Activated CD8-positive, alpha-beta memory T cell treated with anti-CD3 and anti-CD28 coated beads, Interleukin-2, amount 10 ng/mL, durations not matched to agents 7 days and 5 days (primary cell): ENCODE measurements at regions of chr1 and their contacts with region 1.

Region 1: DNA sequence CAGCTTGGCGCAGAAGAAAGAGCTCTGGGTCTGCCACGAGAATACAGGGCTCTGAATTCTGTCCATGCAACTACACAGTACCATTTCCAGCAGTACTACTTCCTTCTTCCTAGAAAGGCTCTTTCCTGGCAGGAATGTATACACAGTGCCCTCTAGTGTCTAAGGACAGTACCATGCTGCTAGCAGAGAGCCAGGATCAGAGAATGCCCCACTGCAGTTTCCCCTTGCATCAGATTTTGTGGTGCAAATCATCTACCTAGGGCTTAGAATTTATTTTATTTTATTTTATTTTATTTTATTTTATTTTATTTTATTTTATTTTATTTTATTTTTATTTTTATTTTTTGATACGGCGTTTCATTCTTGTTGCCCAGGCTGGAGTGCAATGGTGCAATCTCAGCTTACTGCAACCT is 50.8 kb downstream of the PAX7 start:
- DNase-seq: no peak
- ATAC-seq: peak; percentile 42
- H3K4me3 Mint-ChIP-seq: no peak overlapping the region
- H3K27ac Mint-ChIP-seq: no peak overlapping the region
- H3K4me1 Mint-ChIP-seq: peaks cover 2% of the 10 kb centered on the region
- H3K27me3 Mint-ChIP-seq: peaks cover 11% of the 10 kb centered on the region

Region 2: DNA sequence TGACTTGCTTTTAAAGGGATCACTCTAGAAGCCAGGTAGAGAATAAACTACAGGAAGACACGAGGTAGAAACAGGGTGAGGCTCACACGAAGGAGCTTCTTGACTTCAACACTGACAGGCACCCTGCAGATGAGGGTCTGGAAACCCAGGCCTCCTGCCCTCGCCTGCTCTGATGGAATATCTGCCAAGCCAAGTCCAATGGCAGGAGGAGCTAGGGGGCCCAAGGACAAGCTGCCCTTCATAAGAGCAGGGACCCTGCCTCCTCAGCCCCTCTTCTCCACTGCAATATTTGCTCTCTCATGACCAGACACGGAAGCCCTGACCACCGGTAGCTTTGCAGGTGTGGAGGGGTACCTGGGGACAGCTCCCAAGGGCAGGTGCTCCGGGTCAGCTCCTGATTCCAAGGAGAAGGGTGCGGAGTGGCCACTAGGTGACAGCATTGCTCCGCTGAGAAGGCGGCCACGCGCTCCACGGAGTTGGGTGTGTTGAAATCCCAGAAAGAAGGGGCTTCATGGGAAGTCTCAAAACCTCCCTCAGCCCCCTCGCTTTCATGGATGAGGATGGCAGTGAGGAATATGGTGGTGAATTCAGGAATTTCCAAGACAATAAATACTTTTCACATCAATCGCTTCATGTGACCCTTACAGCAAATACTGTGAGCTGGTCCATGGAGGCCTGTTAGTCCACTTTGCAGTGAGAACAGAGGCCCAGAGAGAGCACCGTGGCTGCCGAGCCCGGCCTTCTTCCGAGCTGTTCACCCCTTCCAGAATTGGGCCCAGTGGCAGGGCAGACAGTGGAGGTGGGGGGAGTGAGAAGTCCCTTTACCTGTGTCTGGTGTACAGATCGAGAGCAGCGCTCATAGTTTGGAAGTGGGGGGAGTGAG is 84.0 kb before region 1 on chr1:
- CTCF ChIA-PET with region 1: interaction called, 20 read pairs
- DNase-seq: peak; percentile 56
- ATAC-seq: peak; percentile 64
- H3K4me3 Mint-ChIP-seq: no peak overlapping the region
- H3K27ac Mint-ChIP-seq: no peak overlapping the region
- H3K4me1 Mint-ChIP-seq: no peaks in the 10 kb centered on the region
- H3K27me3 Mint-ChIP-seq: peaks cover 30% of the 10 kb centered on the region

Region 3: DNA sequence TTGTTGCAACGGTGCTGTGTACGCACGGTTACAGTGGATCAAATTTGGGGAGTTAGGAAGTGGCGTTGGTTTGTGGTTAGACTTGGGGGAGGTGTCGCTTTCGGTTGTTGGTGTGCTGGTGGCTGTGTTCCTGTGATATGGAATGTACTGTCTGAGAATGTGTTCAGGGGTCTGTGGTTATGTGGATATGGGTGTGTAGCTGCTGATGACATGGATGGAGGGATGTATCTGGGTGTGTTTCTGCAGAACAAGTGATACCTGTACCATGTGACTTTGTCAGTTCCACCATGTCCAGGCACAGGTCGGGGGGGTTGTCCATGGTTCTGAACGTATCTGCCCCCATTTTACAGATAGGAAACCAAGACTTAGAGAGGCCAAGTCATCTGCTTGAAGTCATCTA is 28.1 kb before region 1 on chr1:
- CTCF ChIA-PET with region 1: no interaction called
- DNase-seq: no peak
- ATAC-seq: no peak
- H3K4me3 Mint-ChIP-seq: no peak overlapping the region
- H3K27ac Mint-ChIP-seq: no peak overlapping the region
- H3K4me1 Mint-ChIP-seq: peaks cover 7% of the 10 kb centered on the region
- H3K27me3 Mint-ChIP-seq: peaks cover 67% of the 10 kb centered on the region

Region 4: DNA sequence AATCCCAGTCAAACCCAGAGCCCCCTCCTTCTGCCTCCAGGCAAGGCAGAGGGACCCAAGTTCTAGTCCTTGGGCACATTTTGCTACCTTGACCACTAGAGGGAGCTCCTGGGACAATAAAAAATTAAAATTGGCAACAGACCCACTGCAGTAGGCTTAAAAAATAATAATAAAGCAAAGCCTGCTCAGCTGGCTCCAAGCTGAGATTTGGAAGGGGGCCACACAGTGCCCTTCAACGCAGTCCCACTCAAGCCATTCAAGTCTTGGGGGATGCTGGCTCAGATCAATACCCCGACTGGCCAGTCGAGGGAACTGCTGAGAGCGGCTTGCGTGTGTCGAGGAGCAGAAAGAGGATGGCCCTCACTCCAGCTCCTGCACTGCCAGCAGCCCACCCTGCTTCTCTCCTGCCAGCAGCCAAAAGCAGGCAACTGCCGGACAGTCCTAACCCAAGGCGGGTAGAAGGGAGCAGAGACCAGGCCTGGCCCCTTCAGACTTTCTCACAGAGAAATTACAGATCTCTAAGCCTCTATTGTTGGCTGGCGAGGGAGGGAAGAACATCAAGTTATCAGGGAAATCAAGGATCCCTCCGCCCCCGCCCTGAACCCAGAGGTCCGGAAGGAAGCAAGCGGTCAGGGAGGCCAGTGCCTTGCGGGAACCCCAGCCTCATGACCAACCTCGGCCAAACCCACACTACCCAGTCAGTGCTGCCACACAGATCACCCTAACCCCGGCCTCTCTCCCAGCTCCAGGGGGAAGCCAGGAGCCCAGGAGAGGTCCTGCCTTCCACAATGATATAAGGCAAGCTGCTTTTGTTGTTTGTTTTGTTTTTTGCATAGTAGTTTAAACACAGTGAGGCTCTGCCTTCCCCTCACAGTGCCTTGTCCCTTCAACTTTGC is 225.8 kb after region 1 on chr1:
- CTCF ChIA-PET with region 1: no interaction called
- DNase-seq: peak; percentile 70
- ATAC-seq: no peak
- H3K4me3 Mint-ChIP-seq: no peak overlapping the region
- H3K27ac Mint-ChIP-seq: no peak overlapping the region
- H3K4me1 Mint-ChIP-seq: peaks cover 11% of the 10 kb centered on the region
- H3K27me3 Mint-ChIP-seq: no peaks in the 10 kb centered on the region

Region 5: GRCh38 chr1:19028110-19028509 is 346.7 kb after region 1 on chr1:
- CTCF ChIA-PET with region 1: no interaction called
- DNase-seq: no peak
- ATAC-seq: no peak
- H3K4me3 Mint-ChIP-seq: no peak overlapping the region
- H3K27ac Mint-ChIP-seq: no peak overlapping the region
- H3K4me1 Mint-ChIP-seq: no peaks in the 10 kb centered on the region
- H3K27me3 Mint-ChIP-seq: peaks cover 29% of the 10 kb centered on the region